Head of caudate nucleus (tissue), 42 donors: ENCODE measurements at regions of chr9 and their contacts with region 1.

Region 1: DNA sequence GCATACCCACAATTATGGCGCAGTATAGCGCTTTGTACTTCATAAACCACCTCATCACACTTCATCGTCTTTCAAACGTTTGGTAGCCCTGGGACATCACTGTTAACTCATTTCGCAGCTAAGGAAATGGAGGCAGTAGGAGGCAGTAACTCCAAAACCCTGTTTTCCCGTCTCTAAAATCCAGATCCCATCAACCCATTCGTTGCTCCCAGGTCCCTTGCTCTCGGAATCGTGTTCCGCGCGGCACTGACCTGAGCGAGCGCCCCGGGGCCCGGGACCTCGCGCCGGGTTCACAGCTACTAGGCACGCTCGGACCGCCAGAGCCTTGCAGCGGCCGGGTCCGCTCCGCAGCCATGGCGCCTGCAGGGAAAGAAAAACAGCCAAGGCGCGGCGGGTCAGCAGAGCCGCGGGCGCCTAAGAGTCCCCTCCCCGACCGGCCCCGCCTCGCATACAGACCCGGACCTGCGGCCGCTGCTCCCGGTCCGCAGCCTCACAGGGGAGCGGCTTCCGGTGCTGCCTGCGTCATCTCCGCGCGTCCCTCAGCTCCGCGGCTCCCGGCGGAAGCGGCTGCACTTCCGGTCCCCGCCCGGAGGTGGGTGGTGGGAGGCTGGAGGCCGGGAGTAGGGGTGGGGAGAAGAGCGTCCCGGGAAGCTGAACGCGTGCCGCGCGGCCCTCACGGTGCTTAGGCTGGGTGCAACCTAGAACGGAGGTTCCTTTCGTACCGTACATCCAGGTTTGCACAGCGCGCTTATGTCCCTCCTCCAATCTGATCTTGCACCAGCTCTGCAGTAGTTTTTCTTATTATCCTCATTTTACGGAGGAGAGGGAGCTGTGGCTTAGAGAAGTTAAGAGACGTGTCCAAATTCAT is at the start of gene FBXW2:
- DNase-seq: peak; percentile 77 to 97 (median 94)

Region 2: GRCh38 chr9:120714088-120714845 is 78.9 kb before region 1 on chr9 and contains the start of gene MEGF9:
- intact Hi-C with region 1: loop called (anchors 5 kb)
- DNase-seq: peak; percentile 98 to 100 (median 100)

Region 3: GRCh38 chr9:120842690-120843499 is 49.8 kb after region 1 on chr9 and contains the start of gene PSMD5:
- intact Hi-C with region 1: loop called (anchors 5 kb)
- DNase-seq: peak; percentile 79 to 99 (median 93)

Region 4: GRCh38 chr9:121399883-121400607 is 606.9 kb after region 1 on chr9:
- intact Hi-C with region 1: no loop called
- DNase-seq: peak in 5 of 42 donors; percentile 7 to 47 (median 15)